GM10248 (cell line): ENCODE measurements at regions of chr18 and their contacts with region 1.

Region 1: GRCh38 chr18:31722369-31722957 is 38.1 kb upstream of the B4GALT6 start:
- DNase-seq: peak; percentile 79
- CTCF ChIP-seq: peak; percentile 89

Region 2: GRCh38 chr18:31419457-31419932 is 303.0 kb before region 1 on chr18:
- CTCF ChIA-PET with region 1: no interaction called
- POLR2A ChIA-PET with region 1: no interaction called
- DNase-seq: no peak
- CTCF ChIP-seq: no peak

Region 3: DNA sequence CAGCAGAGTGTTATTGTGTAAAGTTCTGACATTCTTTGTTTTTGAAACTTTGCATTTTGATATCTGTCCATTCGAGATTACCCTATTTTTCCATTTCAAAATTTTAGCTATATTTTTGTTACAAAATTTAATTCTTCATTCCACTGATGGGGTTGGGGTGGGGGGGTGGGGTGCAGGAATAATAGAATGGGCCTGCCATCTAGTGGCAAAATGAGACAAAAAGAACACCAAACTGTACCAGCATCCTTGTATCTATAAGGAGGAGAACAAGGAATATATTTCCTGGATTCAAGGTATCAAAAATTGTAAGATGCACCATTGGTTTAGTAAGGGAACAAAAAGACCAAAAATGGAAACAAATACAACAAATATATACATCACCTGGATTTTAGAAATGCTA is 158.7 kb before region 1 on chr18:
- CTCF ChIA-PET with region 1: interaction called, 69 read pairs
- POLR2A ChIA-PET with region 1: no interaction called
- DNase-seq: peak; percentile 21
- CTCF ChIP-seq: peak; percentile 7

Region 4: DNA sequence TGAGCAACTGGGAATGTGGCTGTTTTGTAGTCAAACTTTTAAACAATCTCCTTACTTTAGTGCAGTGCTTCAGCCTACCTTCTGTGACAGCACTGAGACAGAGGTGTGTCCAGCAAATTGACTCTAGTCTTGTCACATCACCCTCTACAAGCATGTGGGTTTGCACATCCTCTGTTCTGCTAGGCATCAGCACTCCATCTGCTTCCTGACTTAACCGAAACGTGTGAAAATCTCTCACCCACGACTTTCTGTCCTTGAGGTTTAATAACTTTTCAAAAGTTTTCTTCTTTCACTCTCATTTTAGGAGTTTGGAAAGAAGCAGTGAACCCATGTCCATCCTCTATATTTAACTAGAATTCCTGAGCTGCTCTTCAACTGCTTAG is 88.1 kb before region 1 on chr18:
- CTCF ChIA-PET with region 1: interaction called, 12 read pairs
- POLR2A ChIA-PET with region 1: no interaction called
- DNase-seq: peak; percentile 64
- CTCF ChIP-seq: no peak

Region 5: DNA sequence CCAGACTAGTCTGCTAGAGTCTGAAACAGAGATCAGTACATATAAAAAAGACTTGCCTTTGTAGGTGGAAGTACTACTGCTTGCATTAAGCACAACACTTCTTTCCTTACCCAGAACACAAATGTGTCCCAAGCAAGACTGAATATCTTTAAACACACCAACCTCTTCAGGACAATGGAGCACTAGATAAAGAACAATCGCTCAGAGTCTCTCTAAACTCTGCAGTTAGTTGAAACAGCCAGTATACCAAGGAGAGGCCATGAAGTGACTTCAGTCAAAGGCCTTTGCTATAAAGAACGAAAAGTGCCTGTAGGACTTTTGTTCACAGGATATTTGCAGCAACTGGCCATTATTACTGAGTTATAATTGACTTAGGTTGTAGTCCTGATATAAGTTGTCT is 28.2 kb before region 1 on chr18:
- CTCF ChIA-PET with region 1: interaction called, 15 read pairs
- POLR2A ChIA-PET with region 1: no interaction called
- DNase-seq: no peak
- CTCF ChIP-seq: no peak

Region 6: GRCh38 chr18:31736630-31737029 is 14.2 kb after region 1 on chr18:
- CTCF ChIA-PET with region 1: interaction called, 66 read pairs
- POLR2A ChIA-PET with region 1: no interaction called
- DNase-seq: peak; percentile 22
- CTCF ChIP-seq: no peak